ENCODE measurements at regions of chr11 and their contacts with region 1.

Region 1: DNA sequence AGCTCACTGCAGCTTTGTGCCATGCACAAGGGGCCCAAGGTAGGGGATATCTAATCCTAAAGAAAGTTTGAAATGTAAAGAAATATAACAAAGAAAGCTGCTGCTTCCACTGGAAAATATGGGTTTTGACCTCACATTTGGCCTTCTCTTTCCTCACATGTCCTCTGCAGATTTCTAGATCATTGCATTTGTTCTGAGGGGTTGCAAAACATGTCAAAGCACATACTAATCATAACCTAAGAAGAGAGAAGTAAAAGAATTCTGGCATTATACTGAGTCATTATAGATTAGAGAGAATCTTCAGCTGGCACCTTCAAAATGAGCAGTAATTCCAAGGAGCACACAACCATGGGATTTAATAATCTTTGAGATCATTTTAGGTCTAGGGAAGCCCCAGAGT is 92.5 kb upstream of the CHRM4 start:
- DNase-seq: no peak
- ATAC-seq: no peak
- H3K4me3 ChIP-seq: no peak overlapping the region
- H3K27ac ChIP-seq: peak overlapping the region; percentile 41
- H3K4me1 ChIP-seq: peaks cover 3% of the 10 kb centered on the region
- H3K27me3 ChIP-seq: no peaks in the 10 kb centered on the region
- CTCF ChIP-seq: no peak
- EP300 ChIP-seq: no peak
- POLR2A ChIP-seq: no peak
- RAD21 ChIP-seq: no peak

Region 2: DNA sequence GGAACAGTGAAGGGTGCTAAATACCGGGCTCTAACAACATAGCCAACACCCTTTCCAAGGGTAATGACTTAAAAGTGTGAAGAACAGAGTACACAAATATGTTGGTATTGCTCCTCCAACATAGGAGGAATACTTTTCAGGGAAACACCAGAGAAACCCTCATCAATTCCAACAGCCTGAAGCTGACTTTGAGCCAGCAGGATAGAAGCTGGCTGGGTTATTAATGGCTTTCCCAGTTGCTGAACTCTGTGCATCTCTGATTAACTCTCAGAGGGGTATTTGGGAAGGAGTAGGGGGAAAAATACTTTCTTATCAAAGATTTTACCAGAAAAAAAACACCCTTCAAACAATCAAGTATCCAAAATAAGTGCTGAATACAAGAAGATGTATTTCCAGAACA is 14.1 kb after region 1 on chr11:
- CTCF ChIA-PET with region 1: interaction called, 136 read pairs
- POLR2A ChIA-PET with region 1: interaction called, 3 read pairs
- RAD21 ChIA-PET with region 1: interaction called, 4 read pairs
- SMC1A ChIA-PET with region 1: interaction called, 167 read pairs
- in situ Hi-C with region 1: no loop called
- intact Hi-C with region 1: no loop called
- DNase-seq: no peak
- ATAC-seq: no peak
- H3K4me3 ChIP-seq: no peak overlapping the region
- H3K27ac ChIP-seq: no peak overlapping the region
- H3K4me1 ChIP-seq: no peaks in the 10 kb centered on the region
- H3K27me3 ChIP-seq: no peaks in the 10 kb centered on the region
- CTCF ChIP-seq: no peak
- EP300 ChIP-seq: no peak
- POLR2A ChIP-seq: no peak
- RAD21 ChIP-seq: no peak

Region 3: DNA sequence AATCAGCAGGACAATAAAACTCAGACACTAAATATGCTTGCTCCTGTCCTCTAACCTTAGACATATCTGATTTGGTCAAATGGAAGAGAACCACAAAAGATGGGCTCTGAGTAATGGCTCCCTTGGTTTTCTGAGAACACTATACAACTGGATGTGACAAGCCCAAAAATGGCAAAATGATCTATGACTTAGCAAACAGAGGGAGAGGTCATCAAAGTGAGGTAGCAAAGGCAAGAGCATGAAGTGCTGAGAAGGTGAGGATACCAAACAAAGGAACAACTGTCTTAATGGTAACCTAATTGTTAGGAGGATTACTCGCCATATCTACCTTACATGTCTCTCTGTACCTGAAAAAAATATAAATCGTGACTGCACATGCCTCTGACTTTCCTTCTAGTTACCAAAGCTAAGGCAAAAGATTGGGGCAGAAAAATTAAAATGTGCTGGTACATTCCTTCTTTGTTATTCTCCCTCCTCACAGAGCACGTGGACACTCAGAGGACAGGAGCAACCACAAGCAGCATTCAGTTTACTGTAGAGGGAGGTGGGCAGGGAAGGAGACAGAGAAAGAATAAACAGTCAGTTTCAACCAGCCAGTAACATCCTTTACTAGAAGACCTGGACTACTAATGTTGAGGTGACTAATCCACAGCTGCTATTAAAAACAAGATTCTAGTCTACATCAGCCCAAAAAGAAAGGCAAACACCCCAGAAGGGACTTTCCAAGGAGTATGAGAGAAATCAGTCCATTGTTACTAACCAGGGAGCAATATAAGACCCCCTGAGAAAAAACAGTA is 20.9 kb after region 1 on chr11:
- CTCF ChIA-PET with region 1: interaction called, 136 read pairs
- POLR2A ChIA-PET with region 1: interaction called, 3 read pairs
- RAD21 ChIA-PET with region 1: interaction called, 30 read pairs
- SMC1A ChIA-PET with region 1: interaction called, 51 read pairs
- in situ Hi-C with region 1: no loop called
- intact Hi-C with region 1: no loop called
- DNase-seq: no peak
- ATAC-seq: peak; percentile 83
- H3K4me3 ChIP-seq: no peak overlapping the region
- H3K27ac ChIP-seq: peak overlapping the region; percentile 53
- H3K4me1 ChIP-seq: peaks cover 15% of the 10 kb centered on the region
- H3K27me3 ChIP-seq: no peaks in the 10 kb centered on the region
- CTCF ChIP-seq: no peak
- EP300 ChIP-seq: no peak
- POLR2A ChIP-seq: no peak
- RAD21 ChIP-seq: no peak

Region 4: GRCh38 chr11:46736615-46737014 is 252.5 kb after region 1 on chr11:
- CTCF ChIA-PET with region 1: no interaction called
- POLR2A ChIA-PET with region 1: no interaction called
- RAD21 ChIA-PET with region 1: no interaction called
- SMC1A ChIA-PET with region 1: no interaction called
- in situ Hi-C with region 1: no loop called
- intact Hi-C with region 1: no loop called
- DNase-seq: no peak
- ATAC-seq: no peak
- H3K4me3 ChIP-seq: no peak overlapping the region
- H3K27ac ChIP-seq: no peak overlapping the region
- H3K4me1 ChIP-seq: no peaks in the 10 kb centered on the region
- H3K27me3 ChIP-seq: no peaks in the 10 kb centered on the region
- CTCF ChIP-seq: no peak
- EP300 ChIP-seq: no peak
- POLR2A ChIP-seq: no peak
- RAD21 ChIP-seq: no peak

Measured in GM12878 (cell line).